Endothelial cell of umbilical vein (primary cell): ENCODE measurements at regions of chr1 and their contacts with region 1.

Region 1: GRCh38 chr1:150281837-150282653 is at the start of gene CIART:
- DNase-seq: peak; percentile 91
- H3K4me3 ChIP-seq: peak within 1 kb of the TSS; percentile 20 to 40 (median 29)
- H3K27ac ChIP-seq: no peak within 1 kb of the TSS
- H3K4me1 ChIP-seq: peaks cover 10% of the 10 kb centered on the region
- H3K27me3 ChIP-seq: peaks cover 0 to 8% of the 10 kb centered on the region in 2 experiments
- CTCF ChIP-seq: no peak
- POLR2A ChIP-seq: peak; percentile 44
- total RNA-seq, gene CIART: 1.0 and 2.4 TPM in 2 replicates

Region 2: GRCh38 chr1:150235852-150236613 is 46.0 kb before region 1 on chr1 and contains the start of gene ANP32E:
- CTCF ChIA-PET with region 1: interaction called, 3 read pairs
- POLR2A ChIA-PET with region 1: no interaction called
- dilution Hi-C with region 1: no loop called
- intact Hi-C with region 1: loop called (anchors 1 kb)
- DNase-seq: peak; percentile 99
- H3K4me3 ChIP-seq: peak within 1 kb of the TSS; percentile 72 to 95 (median 86)
- H3K27ac ChIP-seq: peak within 1 kb of the TSS; percentile 61
- H3K4me1 ChIP-seq: peaks cover 11% of the 10 kb centered on the region
- H3K27me3 ChIP-seq: no peaks in the 10 kb centered on the region
- CTCF ChIP-seq: no peak
- POLR2A ChIP-seq: peak; percentile 98
- total RNA-seq, gene ANP32E: 53.4 and 57.9 TPM in 2 replicates

Region 3: GRCh38 chr1:150293433-150294168 is 11.6 kb after region 1 on chr1 and contains the start of gene MRPS21:
- CTCF ChIA-PET with region 1: interaction called, 6 read pairs
- POLR2A ChIA-PET with region 1: interaction called, 4 read pairs
- dilution Hi-C with region 1: no loop called
- intact Hi-C with region 1: loop called (anchors 1 kb)
- DNase-seq: peak; percentile 94
- H3K4me3 ChIP-seq: peak within 1 kb of the TSS; percentile 25 to 90 (median 54)
- H3K27ac ChIP-seq: peak within 1 kb of the TSS; percentile 81
- H3K4me1 ChIP-seq: peaks cover 13% of the 10 kb centered on the region
- H3K27me3 ChIP-seq: no peaks in the 10 kb centered on the region
- CTCF ChIP-seq: no peak
- POLR2A ChIP-seq: peak; percentile 94
- total RNA-seq, gene MRPS21: 73.0 and 76.7 TPM in 2 replicates

Region 4: GRCh38 chr1:150383631-150384324 is 101.7 kb after region 1 on chr1:
- CTCF ChIA-PET with region 1: no interaction called
- POLR2A ChIA-PET with region 1: no interaction called
- dilution Hi-C with region 1: no loop called
- intact Hi-C with region 1: no loop called
- DNase-seq: no peak
- H3K4me3 ChIP-seq: no peak overlapping the region
- H3K27ac ChIP-seq: no peak overlapping the region
- H3K4me1 ChIP-seq: no peaks in the 10 kb centered on the region
- H3K27me3 ChIP-seq: no peaks in the 10 kb centered on the region
- CTCF ChIP-seq: no peak
- POLR2A ChIP-seq: no peak